H1 (cell line): ENCODE measurements at regions of chr1 and their contacts with region 1.

Region 1: DNA sequence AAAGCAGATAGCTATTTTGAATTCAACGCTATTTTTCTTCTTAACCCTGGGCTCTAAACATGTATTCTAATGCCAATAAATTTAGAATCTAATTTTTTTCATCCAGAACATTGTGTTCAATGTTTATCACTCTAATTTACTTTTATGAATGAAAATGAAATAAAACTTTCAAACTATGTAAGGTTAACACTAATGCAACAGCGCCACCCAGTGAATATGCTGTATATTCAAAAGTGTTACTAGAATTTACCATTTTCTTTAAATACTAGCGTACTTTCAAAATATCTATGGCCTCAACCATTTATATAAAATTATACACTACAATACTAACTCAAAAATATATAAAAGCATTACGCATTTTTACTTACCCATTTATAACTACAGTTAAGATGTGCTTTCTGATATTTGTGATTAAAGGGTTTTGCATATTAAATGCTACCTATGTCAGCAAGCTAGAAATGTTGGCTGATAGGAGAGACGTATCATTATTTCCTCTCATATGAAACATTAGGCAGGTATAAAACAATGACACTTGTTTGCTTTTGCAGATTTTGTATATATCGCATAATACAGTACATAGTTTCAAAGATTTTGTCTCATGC is 5.9 kb upstream of the NUF2 start:
- DNase-seq: no peak
- H3K4me3 ChIP-seq: no peak overlapping the region
- H3K27ac ChIP-seq: no peak overlapping the region
- H3K4me1 ChIP-seq: peaks cover 0 to 1% (median 0%) of the 10 kb centered on the region in 4 experiments; a peak in 1 of 7 replicates
- H3K27me3 ChIP-seq: no peaks in the 10 kb centered on the region
- CTCF ChIP-seq: peak in 2 of 3 experiments; percentile 29 to 49; a peak in 2 of 4 replicates
- EP300 ChIP-seq: no peak
- POLR2A ChIP-seq: no peak
- RAD21 ChIP-seq: peak in 1 of 2 experiments; percentile 75

Region 2: DNA sequence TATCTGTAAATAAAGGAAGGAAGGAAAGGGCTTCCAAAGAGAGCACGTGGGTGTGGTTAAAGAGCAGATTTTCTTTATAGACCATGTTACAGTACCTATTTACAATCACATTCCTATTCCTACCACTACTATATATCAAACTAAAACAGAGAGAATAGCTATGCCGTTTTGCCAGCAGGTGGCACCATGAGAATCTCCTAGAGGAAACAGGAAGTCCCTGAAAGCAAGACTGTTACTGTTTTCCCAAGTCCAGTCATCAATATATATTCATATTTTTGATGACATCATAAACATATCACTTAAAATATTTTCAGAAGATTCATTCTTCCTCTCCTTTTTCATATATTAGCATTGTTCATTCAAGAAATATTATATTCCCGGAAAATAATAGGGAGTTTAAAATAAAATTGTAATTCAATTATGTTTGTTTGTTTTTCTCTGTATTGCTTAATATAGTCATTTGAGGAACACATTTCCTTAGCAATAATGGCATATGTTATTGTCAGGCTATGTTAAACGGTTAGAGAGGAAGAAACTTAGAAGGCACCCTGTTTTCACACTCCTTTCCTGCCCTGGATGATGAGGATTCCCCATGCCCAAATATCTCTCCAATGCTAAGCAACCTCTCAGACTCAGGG is 461.5 kb before region 1 on chr1:
- CTCF ChIA-PET with region 1: interaction called, 38 read pairs
- POLR2A ChIA-PET with region 1: interaction called, 3 read pairs
- DNase-seq: no peak
- H3K4me3 ChIP-seq: no peak overlapping the region
- H3K27ac ChIP-seq: no peak overlapping the region
- H3K4me1 ChIP-seq: no peaks in the 10 kb centered on the region
- H3K27me3 ChIP-seq: no peaks in the 10 kb centered on the region
- CTCF ChIP-seq: peak in 2 of 3 experiments; percentile 52 to 69; a peak in 3 of 4 replicates
- EP300 ChIP-seq: no peak
- POLR2A ChIP-seq: no peak
- RAD21 ChIP-seq: peak; percentile 67 to 68

Region 3: GRCh38 chr1:162878000-162878596 is 437.8 kb before region 1 on chr1:
- CTCF ChIA-PET with region 1: interaction called, 31 read pairs
- POLR2A ChIA-PET with region 1: no interaction called
- DNase-seq: peak; percentile 31 to 87
- H3K4me3 ChIP-seq: no peak overlapping the region
- H3K27ac ChIP-seq: no peak overlapping the region
- H3K4me1 ChIP-seq: peaks cover 0 to 3% (median 0%) of the 10 kb centered on the region in 4 experiments; a peak in 2 of 7 replicates
- H3K27me3 ChIP-seq: no peaks in the 10 kb centered on the region
- CTCF ChIP-seq: peak; percentile 45 to 92 (median 86)
- EP300 ChIP-seq: no peak
- POLR2A ChIP-seq: no peak
- RAD21 ChIP-seq: peak; percentile 99

Region 4: DNA sequence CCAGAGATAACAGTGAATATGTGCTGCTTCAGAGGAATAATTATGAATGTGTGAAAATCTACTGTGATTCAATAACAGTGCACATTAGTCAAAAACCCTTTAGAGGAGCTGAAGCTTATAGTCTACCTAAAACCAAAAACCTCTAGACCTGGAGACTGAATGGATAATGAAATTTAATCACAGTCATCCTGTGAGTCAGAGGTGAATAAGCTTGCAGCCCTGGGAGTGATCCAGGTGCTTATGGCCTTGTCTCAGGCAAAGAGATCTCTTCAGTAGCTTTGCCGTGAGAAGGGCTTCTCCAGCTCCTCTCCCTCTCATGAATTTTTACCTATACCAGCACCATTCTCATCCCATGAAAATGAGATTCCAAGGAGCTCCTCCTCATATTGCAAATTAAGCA is 328.0 kb before region 1 on chr1:
- CTCF ChIA-PET with region 1: interaction called, 14 read pairs
- POLR2A ChIA-PET with region 1: no interaction called
- DNase-seq: no peak
- H3K4me3 ChIP-seq: no peak overlapping the region
- H3K27ac ChIP-seq: no peak overlapping the region
- H3K4me1 ChIP-seq: 0 out of 7 replicates have a peak, but pooled peaks cover 0 to 2% (median 0%) of the 10 kb centered on the region in 4 experiments
- H3K27me3 ChIP-seq: no peaks in the 10 kb centered on the region
- CTCF ChIP-seq: no peak
- EP300 ChIP-seq: no peak
- POLR2A ChIP-seq: no peak
- RAD21 ChIP-seq: no peak

Region 5: GRCh38 chr1:163071405-163072255 is 244.2 kb before region 1 on chr1:
- CTCF ChIA-PET with region 1: interaction called, 86 read pairs
- POLR2A ChIA-PET with region 1: interaction called, 5 read pairs
- DNase-seq: peak; percentile 3 to 63
- H3K4me3 ChIP-seq: no peak overlapping the region
- H3K27ac ChIP-seq: no peak overlapping the region
- H3K4me1 ChIP-seq: no peaks in the 10 kb centered on the region; a peak in 1 of 7 replicates
- H3K27me3 ChIP-seq: no peaks in the 10 kb centered on the region
- CTCF ChIP-seq: peak; percentile 73 to 86 (median 77)
- EP300 ChIP-seq: no peak
- POLR2A ChIP-seq: no peak
- RAD21 ChIP-seq: peak; percentile 65 to 72

Region 6: DNA sequence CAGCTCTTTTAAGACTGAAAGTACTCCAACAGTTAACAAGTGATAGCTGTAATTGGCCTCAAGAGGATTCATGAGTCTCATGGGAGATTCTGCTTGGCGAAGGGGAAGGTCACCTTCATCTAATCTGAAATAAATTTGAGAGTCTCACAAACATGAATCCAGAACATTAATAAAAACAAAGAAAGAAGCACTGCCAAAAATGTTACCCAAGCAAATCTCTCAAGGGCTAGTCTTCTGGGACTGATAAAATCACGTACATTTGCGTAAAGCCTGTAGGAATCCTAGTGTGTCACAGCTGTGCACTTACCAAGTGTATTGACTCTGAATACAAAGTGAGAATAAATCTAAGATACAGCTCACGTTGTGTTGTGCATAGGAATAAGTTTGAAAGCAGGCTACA is 15.3 kb before region 1 on chr1:
- CTCF ChIA-PET with region 1: interaction called, 12 read pairs
- POLR2A ChIA-PET with region 1: interaction called, 4 read pairs
- DNase-seq: no peak
- H3K4me3 ChIP-seq: no peak overlapping the region
- H3K27ac ChIP-seq: no peak overlapping the region
- H3K4me1 ChIP-seq: peaks cover 0 to 3% (median 0%) of the 10 kb centered on the region in 4 experiments; a peak in 3 of 7 replicates
- H3K27me3 ChIP-seq: no peaks in the 10 kb centered on the region
- CTCF ChIP-seq: no peak
- EP300 ChIP-seq: no peak
- POLR2A ChIP-seq: no peak
- RAD21 ChIP-seq: no peak